ENCODE measurements at regions of chr20 and their contacts with region 1.

Region 1: DNA sequence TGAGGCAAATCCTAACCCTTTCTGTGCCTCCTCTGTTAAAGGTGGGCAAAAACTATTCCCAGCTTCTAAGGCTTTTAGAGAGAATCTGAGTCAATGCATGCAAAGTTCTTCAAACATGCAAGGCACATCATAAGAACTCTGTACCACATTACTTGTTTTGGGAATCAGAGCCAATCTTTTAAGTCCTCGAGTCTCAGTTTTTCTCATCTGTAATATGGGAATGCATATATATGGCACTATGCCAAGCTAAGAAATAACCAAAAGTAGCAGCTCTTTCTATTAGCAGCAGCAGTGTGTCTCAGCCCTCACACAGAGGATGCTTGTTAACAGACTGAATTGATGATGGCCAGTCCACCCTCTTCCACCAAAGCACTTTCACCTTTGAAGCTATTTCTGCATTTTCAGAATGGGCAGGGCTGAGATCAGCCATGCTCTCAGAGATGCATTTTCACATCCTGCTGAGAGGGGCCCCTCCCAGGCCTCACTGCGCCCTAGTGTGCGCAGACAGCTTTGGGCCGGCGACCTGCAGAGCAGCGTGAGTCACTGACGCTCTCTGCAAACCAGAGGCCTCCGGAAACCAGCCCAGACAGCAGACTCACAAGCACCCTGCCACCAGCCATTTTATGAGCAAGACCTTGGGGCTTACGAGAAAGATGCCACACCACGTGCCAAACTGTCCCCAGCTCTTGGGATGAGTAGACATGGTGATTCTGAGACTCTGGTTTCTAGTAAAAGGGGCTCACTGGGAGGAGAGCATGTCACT is 138.0 kb downstream of the NFATC2 start:
- DNase-seq: no peak
- H3K4me3 ChIP-seq: no peak overlapping the region
- H3K27ac ChIP-seq: no peak overlapping the region
- H3K4me1 ChIP-seq: no peaks in the 10 kb centered on the region
- H3K27me3 ChIP-seq: no peaks in the 10 kb centered on the region
- CTCF ChIP-seq: no peak
- EP300 ChIP-seq: no peak
- POLR2A ChIP-seq: no peak
- RAD21 ChIP-seq: no peak

Region 2: DNA sequence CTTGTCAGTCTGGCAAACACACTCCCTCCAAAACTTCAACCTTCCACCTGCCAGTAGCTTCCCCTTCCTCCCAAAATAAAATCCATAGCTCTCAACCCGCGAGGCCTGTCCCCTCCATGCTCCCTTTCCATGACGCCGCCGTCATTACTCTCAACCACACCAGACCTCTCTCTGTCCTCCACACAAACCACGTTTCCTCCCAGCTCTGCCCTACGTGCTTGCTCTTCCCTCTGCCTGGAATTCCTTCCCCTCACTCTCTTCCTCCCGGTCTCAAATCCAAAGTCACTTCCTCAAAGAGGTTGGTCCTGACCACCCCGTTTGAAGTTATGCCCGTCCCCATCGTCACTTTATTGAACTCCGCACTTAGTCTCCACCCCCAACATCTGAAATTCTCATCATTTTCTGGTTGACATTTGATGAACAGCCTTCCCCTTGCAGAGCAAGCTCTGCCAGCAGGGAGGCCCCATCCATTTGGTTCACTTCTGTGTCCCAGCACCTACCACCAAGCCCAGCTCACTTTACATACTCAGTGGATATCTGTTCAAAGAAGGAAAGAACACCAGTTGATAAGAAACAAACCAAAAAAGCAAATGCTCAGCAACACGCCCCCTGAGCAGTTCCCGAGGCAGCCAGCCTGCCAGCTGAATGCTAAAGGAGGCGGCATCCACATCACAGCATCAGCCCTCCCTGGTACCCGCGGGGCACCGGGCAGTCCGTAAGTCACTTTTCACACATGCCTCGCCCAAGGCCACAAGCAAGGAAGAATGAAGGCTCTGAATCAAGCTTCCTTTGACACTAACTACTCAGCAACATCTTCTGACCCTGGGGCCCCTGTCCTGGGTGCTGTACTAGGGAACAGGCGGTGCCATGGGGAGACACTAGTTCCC is 13.0 kb after region 1 on chr20:
- CTCF ChIA-PET with region 1: interaction called, 15 read pairs
- POLR2A ChIA-PET with region 1: no interaction called
- DNase-seq: no peak
- H3K4me3 ChIP-seq: no peak overlapping the region
- H3K27ac ChIP-seq: no peak overlapping the region
- H3K4me1 ChIP-seq: peaks cover 2 to 6% (median 3%) of the 10 kb centered on the region in 4 experiments; a peak in 6 of 7 replicates
- H3K27me3 ChIP-seq: no peaks in the 10 kb centered on the region
- CTCF ChIP-seq: no peak
- EP300 ChIP-seq: no peak
- POLR2A ChIP-seq: no peak
- RAD21 ChIP-seq: no peak

Region 3: DNA sequence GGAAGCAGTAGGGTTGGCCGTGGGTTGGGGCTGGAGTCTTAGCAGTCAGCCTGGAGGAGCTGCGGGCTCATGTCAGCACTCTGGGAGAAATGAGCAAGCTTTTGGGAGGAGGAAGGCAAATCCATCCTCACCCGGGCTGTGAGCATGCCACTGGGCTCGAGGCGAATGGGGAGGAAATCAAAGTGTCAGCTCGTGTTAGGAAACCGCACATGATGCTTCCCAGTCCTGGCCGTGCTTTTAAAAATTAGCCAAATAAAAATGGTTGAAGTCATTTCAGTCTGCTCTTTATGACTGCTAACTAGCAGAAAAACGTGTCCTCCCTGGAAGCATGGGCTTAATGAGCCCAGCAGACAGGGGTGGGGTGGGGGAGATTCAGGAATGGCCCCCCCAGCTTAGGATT is 40.0 kb after region 1 on chr20:
- CTCF ChIA-PET with region 1: no interaction called
- POLR2A ChIA-PET with region 1: no interaction called
- DNase-seq: no peak
- H3K4me3 ChIP-seq: no peak overlapping the region
- H3K27ac ChIP-seq: no peak overlapping the region
- H3K4me1 ChIP-seq: peaks cover 0 to 5% (median 0%) of the 10 kb centered on the region in 4 experiments; a peak in 3 of 7 replicates
- H3K27me3 ChIP-seq: no peaks in the 10 kb centered on the region
- CTCF ChIP-seq: no peak
- EP300 ChIP-seq: no peak
- POLR2A ChIP-seq: no peak
- RAD21 ChIP-seq: no peak